CD8-positive, alpha-beta memory T cell (primary cell): ENCODE measurements at regions of chr1 and their contacts with region 1.

Region 1: DNA sequence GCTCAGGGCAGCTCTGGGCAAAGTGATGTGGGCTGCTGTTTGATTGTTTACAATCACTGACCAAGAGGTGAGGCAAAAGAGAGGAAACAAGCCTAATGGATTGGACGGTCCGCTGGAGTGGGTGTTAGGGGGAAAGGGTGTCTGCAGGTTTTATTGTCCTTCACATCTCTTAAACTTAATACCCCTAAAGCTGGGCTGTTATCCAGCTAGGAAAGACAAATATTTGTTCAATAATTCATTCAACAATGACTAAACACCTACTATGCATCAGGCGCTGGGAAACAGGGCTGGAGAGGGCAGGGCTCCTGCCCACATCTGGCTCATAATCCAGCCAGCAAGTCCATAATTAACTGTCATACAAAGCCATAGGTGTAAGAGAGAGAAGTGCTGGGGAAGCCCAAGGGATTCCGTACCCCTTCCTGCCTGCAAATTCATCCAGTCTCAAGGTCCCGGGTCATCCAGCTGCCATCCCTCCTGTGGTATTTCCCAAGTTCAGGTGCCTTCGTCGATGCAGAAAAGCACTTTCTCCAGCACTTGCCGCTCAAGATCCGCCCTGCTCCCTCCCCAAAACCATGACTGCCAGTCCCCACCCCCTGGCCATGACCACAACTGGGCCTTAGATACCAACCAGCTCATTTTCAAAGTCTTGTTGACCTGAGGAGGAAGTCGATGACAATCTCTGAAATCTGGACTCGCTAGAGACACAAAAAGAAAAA is 10.7 kb downstream of the TMEM63A start:
- DNase-seq: peak in 1 of 5 donors; percentile 41
- H3K4me3 ChIP-seq: no peak overlapping the region
- H3K4me3 Mint-ChIP-seq: peak overlapping the region in 2 of 7 donors; percentile 26 to 41
- H3K27ac ChIP-seq: no peak overlapping the region
- H3K27ac Mint-ChIP-seq: peak overlapping the region in 7 of 8 donors; percentile 11 to 83 (median 72)
- H3K4me1 ChIP-seq: peaks cover 37% of the 10 kb centered on the region
- H3K4me1 Mint-ChIP-seq: peaks cover 62 to 76% (median 75%) of the 10 kb centered on the region in 3 donors
- H3K27me3 ChIP-seq: no peaks in the 10 kb centered on the region
- H3K27me3 Mint-ChIP-seq: no peaks in the 10 kb centered on the region

Region 2: DNA sequence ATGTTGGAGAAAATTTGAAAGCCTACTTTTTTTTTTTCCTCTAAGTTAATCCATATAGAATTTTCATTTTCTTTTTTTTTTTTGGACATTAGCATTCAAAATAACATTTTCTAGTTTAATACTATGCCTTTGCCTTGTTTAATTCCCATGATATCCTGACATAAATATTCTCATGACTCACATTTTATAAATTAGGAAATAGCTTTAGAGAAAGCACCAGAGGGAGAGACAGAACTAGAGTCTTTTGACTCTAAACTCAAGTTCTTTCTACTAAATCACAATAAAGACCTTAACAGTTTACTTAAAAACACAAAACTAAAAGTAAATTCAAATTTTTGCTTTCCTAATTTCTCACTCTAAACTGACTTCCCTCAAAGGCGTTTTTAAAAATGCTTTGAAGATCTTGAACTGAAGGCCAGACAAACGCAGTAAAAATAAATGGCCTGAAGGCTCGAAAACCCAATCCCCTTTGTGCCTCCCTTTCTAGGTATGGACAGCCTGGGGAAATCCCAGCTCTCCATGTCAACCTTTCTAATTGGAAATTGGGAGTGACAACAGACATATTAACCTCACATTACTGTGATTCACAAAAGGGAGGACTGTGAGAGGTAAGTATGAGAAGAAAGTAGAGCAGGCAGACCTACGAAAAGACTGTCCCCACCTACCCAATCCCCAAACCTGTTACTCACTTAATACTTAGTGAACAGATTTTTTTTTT is 323.2 kb before region 1 on chr1:
- CTCF ChIA-PET with region 1: no interaction called
- POLR2A ChIA-PET with region 1: interaction called, 15 read pairs
- DNase-seq: no peak
- H3K4me3 ChIP-seq: no peak overlapping the region
- H3K4me3 Mint-ChIP-seq: no peak overlapping the region
- H3K27ac ChIP-seq: no peak overlapping the region
- H3K27ac Mint-ChIP-seq: peak overlapping the region in 1 of 8 donors; percentile 72
- H3K4me1 ChIP-seq: no peaks in the 10 kb centered on the region
- H3K4me1 Mint-ChIP-seq: peaks cover 4 to 6% (median 5%) of the 10 kb centered on the region in 3 donors
- H3K27me3 ChIP-seq: no peaks in the 10 kb centered on the region
- H3K27me3 Mint-ChIP-seq: peaks cover 2 to 5% of the 10 kb centered on the region in 2 donors

Region 3: GRCh38 chr1:225651376-225651871 is 220.1 kb before region 1 on chr1:
- CTCF ChIA-PET with region 1: no interaction called
- POLR2A ChIA-PET with region 1: no interaction called
- DNase-seq: no peak
- H3K4me3 ChIP-seq: no peak overlapping the region
- H3K4me3 Mint-ChIP-seq: peak overlapping the region; percentile 88 to 95 (median 92)
- H3K27ac ChIP-seq: no peak overlapping the region
- H3K27ac Mint-ChIP-seq: no peak overlapping the region
- H3K4me1 ChIP-seq: peaks cover 12% of the 10 kb centered on the region
- H3K4me1 Mint-ChIP-seq: peaks cover 16 to 18% (median 17%) of the 10 kb centered on the region in 3 donors
- H3K27me3 ChIP-seq: peaks cover 26% of the 10 kb centered on the region
- H3K27me3 Mint-ChIP-seq: peaks cover 23 to 50% of the 10 kb centered on the region in 2 donors

Region 4: GRCh38 chr1:225720937-225721336 is 150.6 kb before region 1 on chr1:
- CTCF ChIA-PET with region 1: no interaction called
- POLR2A ChIA-PET with region 1: no interaction called
- DNase-seq: no peak
- H3K4me3 ChIP-seq: no peak overlapping the region
- H3K4me3 Mint-ChIP-seq: no peak overlapping the region
- H3K27ac ChIP-seq: no peak overlapping the region
- H3K27ac Mint-ChIP-seq: no peak overlapping the region
- H3K4me1 ChIP-seq: no peaks in the 10 kb centered on the region
- H3K4me1 Mint-ChIP-seq: no peaks in the 10 kb centered on the region
- H3K27me3 ChIP-seq: no peaks in the 10 kb centered on the region
- H3K27me3 Mint-ChIP-seq: peaks cover 0 to 14% of the 10 kb centered on the region in 2 donors